Mammary epithelial cell (primary cell): ENCODE measurements at regions of chr2 and their contacts with region 1.

Region 1: DNA sequence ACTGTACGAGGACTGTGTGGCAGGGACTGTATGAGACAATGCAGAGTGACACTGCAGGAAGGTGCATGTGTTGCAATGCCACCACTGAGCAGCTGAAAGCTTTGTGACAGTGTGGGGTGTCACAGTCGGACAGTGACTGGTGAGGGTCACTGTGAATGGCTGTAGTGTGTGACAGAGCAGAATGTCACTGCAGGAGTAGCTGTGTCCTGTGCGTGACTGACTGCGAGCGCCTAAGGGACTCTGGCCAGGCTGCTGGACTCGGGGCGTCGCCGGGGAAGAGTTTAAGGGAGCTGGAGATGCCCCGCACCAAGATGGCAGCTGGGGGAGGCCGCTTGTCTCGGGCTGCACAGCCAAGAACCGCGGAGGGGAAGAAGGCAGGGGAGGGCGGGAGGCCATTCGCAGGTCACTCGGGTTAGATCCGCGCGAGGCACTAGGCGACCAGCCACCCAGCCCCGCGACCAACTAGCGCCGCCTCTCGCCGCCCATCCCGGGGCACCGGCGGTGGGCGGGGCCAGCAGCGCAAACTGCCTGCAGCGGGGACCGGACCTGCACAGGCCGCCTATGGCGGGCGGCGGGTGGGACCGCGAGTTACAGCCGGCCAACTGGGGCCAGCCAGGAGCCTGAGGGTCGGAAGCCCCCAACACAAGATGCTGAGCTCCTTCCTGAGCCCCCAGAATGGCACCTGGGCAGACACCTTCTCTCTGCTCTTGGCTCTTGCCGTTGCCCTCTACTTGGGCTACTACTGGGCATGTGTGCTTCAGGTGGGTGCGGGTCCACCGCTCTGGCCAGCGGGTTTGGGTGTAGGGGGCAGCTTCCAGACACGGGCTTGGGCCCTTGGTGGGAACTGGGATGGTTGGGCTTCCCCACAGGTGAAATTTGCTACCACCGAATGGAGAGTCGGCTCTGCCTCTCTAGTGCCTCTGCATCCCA is at the start of gene ABHD1:
- DNase-seq: no peak
- H3K4me3 ChIP-seq: peak within 1 kb of the TSS; percentile 29 to 58 (median 52)
- H3K27ac ChIP-seq: no peak within 1 kb of the TSS
- H3K4me1 ChIP-seq: peaks cover 10% of the 10 kb centered on the region
- H3K27me3 ChIP-seq: peaks cover 3% of the 10 kb centered on the region
- CTCF ChIP-seq: no peak
- total RNA-seq, gene ABHD1: 0.17 TPM in 1 of 2 donors, not detected in the other

Region 2: GRCh38 chr2:26018176-26018716 is 1105.3 kb before region 1 on chr2:
- CTCF ChIA-PET with region 1: no interaction called
- dilution Hi-C with region 1: no loop called
- in situ Hi-C with region 1: no loop called
- intact Hi-C with region 1: no loop called
- DNase-seq: peak; percentile 95
- H3K4me3 ChIP-seq: no peak overlapping the region
- H3K27ac ChIP-seq: peak overlapping the region; percentile 81
- H3K4me1 ChIP-seq: peaks cover 17% of the 10 kb centered on the region
- H3K27me3 ChIP-seq: no peaks in the 10 kb centered on the region
- CTCF ChIP-seq: no peak

Region 3: GRCh38 chr2:27071277-27071989 is 52.1 kb before region 1 on chr2 and contains the start of gene OST4:
- CTCF ChIA-PET with region 1: no interaction called
- dilution Hi-C with region 1: loop called (anchors 5 kb)
- in situ Hi-C with region 1: no loop called
- intact Hi-C with region 1: no loop called
- DNase-seq: peak; percentile 90
- H3K4me3 ChIP-seq: peak within 1 kb of the TSS; percentile 79 to 98 (median 91)
- H3K27ac ChIP-seq: peak within 1 kb of the TSS; percentile 76
- H3K4me1 ChIP-seq: peaks cover 16% of the 10 kb centered on the region
- H3K27me3 ChIP-seq: no peaks in the 10 kb centered on the region
- CTCF ChIP-seq: no peak
- total RNA-seq, gene OST4: 121 to 313 TPM

Region 4: DNA sequence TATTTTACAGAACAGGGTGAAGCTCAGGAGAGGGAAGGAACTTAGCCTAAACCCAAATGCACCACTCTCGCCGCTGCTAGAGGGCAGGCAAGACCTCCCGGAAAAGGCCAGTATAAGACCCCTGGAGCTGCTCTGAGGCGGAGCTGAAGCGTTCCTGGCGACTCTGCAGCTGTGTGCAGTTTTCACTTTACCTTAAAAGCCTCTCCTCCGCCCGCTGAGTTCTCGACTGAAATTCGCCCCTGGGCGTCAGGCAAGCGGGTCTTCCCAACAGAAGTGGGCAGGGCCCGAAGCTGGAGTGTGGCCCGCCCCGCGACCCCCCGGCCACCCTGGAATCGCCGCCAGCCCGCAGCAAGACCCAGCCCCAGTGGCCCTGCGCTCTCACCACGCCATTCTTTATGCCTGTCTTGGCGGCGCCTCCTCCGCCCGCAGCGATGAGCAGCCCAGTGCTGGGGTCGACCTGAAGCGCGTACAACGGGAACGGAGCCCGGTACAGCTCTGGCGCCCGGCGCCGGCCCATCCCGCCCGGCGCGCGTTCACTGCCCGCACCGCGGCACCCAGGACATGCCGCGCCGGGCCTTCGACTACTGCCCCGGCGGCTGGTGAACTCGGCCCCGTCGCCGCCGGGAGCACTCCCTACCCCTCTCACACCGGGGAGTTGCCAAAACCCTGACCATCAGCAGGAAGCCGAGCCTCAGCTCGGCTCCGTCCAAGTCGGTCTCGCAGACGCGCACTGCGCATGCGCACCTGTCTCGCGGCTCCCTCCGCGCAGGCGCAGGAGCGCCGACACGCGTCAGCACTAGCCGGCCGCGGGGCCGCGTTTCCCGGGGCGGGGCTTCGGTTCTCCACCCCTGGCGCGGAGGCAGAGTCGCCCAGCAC is 10.6 kb after region 1 on chr2 and contains the start of gene PREB:
- CTCF ChIA-PET with region 1: no interaction called
- dilution Hi-C with region 1: no loop called
- in situ Hi-C with region 1: no loop called
- intact Hi-C with region 1: no loop called
- DNase-seq: peak; percentile 93
- H3K4me3 ChIP-seq: peak within 1 kb of the TSS; percentile 76 to 96 (median 87)
- H3K27ac ChIP-seq: peak within 1 kb of the TSS; percentile 71
- H3K4me1 ChIP-seq: peaks cover 6% of the 10 kb centered on the region
- H3K27me3 ChIP-seq: no peaks in the 10 kb centered on the region
- CTCF ChIP-seq: peak in 1 of 2 donors; percentile 19
- total RNA-seq, gene PREB: 31.0 to 48.9 TPM

Region 5: DNA sequence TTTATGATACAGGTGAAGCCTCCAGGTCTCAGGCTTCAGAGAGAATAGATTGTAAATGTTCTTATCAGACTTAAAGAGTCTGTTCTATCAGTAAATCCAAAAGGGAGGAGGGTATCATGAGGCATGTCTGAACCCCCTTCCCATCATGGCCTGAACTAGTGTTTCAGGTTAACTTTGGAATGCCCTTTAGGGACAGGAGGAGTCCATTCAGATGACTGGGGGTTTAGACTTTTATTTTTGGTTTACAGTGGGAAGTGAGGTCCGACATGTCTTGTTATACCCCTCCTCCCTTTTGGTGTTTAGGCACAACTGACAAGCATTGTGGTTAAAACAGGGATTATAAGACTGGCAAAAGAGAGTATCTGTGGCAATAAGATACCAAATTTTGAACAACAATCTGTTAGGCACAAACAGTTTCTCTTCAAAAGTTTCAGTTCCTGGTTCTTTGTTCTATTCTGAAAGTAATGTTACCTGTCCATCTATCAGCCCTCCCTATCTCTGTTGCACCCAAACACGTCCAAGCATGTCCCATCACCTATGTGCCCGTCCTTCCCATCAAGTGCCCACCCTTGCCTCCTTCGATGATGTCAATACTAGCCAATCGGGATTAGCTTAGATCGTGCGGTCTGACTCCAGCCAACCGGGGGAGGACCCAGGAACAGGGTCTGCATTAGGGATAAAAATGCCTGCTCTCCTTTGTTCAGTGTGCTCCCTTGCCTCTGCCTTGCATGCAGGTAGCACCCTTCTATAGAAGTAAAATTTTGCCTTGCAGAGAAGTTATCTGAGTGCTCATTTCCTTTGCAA is 41.6 kb after region 1 on chr2:
- CTCF ChIA-PET with region 1: interaction called, 3 read pairs
- dilution Hi-C with region 1: loop called (anchors 5 kb)
- in situ Hi-C with region 1: no loop called
- intact Hi-C with region 1: no loop called
- DNase-seq: no peak
- H3K4me3 ChIP-seq: no peak overlapping the region
- H3K27ac ChIP-seq: no peak overlapping the region
- H3K4me1 ChIP-seq: peaks cover 4% of the 10 kb centered on the region
- H3K27me3 ChIP-seq: no peaks in the 10 kb centered on the region
- CTCF ChIP-seq: no peak

Region 6: GRCh38 chr2:27211829-27212627 is 88.5 kb after region 1 on chr2 and contains the starts of genes ATRAID and SLC5A6:
- CTCF ChIA-PET with region 1: no interaction called
- dilution Hi-C with region 1: no loop called
- in situ Hi-C with region 1: no loop called
- intact Hi-C with region 1: loop called (anchors 1 kb)
- DNase-seq: peak; percentile 88
- H3K4me3 ChIP-seq: peak within 1 kb of the TSS; percentile 62 to 93 (median 89)
- H3K27ac ChIP-seq: peak within 1 kb of the TSS; percentile 98
- H3K4me1 ChIP-seq: peaks cover 32% of the 10 kb centered on the region
- H3K27me3 ChIP-seq: no peaks in the 10 kb centered on the region
- CTCF ChIP-seq: no peak
- total RNA-seq, gene ATRAID: 76.5 to 127 TPM
- total RNA-seq, gene SLC5A6: 19.7 to 22.8 TPM

Region 7: GRCh38 chr2:27223416-27223815 is 99.8 kb after region 1 on chr2:
- CTCF ChIA-PET with region 1: no interaction called
- dilution Hi-C with region 1: no loop called
- in situ Hi-C with region 1: no loop called
- intact Hi-C with region 1: no loop called
- DNase-seq: no peak
- H3K4me3 ChIP-seq: no peak overlapping the region
- H3K27ac ChIP-seq: no peak overlapping the region
- H3K4me1 ChIP-seq: peaks cover 11% of the 10 kb centered on the region
- H3K27me3 ChIP-seq: no peaks in the 10 kb centered on the region
- CTCF ChIP-seq: no peak

Region 8: DNA sequence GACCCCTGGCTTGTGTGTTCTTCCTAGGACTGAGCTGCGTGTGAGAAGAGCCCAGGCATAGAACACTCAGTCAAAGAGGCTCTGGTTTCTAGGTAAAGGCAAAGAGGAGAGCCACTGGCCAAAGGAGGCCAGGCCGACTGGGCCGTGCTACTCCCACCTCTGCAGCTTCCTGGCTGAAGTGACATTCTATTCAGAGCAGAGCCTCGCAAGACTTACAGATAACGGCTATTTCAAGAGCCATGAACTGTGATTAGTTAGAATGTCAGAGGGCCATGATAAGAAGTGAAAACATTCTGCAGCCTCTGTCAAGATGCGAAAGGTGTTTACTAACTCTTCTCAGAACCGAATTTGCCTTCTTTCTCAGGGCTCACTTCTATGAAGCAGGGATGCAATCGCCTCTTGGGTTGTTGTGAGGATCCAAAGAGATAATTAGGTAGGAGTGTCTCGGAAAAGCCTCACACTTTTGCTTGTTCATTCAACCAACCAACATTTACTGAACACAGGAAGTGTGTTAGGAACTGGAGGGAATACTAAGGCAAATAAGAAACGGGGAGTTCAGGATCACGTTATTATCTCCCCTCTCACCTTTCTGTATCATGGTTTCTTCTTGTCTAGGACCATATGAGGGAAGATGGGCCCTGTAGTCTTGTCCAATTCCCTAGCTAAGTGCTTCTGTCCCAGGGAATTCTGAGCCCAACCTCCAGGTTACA is 148.2 kb after region 1 on chr2:
- CTCF ChIA-PET with region 1: no interaction called
- dilution Hi-C with region 1: loop called (anchors 5 kb)
- in situ Hi-C with region 1: no loop called
- intact Hi-C with region 1: no loop called
- DNase-seq: no peak
- H3K4me3 ChIP-seq: no peak overlapping the region
- H3K27ac ChIP-seq: no peak overlapping the region
- H3K4me1 ChIP-seq: peaks cover 9% of the 10 kb centered on the region
- H3K27me3 ChIP-seq: no peaks in the 10 kb centered on the region
- CTCF ChIP-seq: no peak